KBM-7 (cell line): ENCODE measurements at regions of chr19 and their contacts with region 1.

Region 1: GRCh38 chr19:42108527-42109389 is 23.5 kb downstream of the POU2F2 start:
- DNase-seq: peak; percentile 91

Region 2: DNA sequence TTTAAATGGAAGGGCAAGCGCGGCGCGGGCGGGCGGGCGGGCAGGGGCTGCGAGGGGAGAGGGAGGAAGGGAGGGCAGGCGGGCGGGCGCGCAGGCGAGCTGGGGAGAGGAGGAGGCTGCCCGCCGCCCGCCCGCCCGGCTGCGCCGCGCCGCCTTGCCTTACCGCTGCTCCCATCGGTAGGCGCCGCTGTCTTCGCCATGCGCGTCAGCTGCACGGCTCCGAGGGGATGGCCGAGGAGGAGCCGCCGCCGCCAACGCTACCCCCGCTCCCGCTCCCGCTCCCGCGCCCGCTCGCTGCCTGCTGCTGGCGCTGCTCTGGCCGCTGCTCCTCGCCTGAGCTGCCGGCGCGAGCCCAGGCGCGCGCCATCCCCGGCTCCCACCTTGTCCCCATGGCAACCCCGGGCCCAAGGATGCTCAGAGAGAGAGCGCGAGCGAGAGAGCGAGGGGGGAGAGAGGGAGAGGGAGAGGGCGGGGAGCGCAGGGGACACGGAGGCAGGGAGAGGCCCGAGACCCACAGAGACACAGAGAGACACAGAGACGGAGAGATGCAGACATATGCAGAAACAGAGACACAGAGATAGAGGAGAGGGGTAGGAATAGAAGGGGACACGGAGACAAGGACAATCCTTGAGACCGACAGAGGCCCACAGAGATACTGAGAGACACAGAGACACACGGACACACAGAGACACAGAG is 68.4 kb after region 1 on chr19:
- in situ Hi-C with region 1: no loop called
- DNase-seq: peak; percentile 78

Region 3: DNA sequence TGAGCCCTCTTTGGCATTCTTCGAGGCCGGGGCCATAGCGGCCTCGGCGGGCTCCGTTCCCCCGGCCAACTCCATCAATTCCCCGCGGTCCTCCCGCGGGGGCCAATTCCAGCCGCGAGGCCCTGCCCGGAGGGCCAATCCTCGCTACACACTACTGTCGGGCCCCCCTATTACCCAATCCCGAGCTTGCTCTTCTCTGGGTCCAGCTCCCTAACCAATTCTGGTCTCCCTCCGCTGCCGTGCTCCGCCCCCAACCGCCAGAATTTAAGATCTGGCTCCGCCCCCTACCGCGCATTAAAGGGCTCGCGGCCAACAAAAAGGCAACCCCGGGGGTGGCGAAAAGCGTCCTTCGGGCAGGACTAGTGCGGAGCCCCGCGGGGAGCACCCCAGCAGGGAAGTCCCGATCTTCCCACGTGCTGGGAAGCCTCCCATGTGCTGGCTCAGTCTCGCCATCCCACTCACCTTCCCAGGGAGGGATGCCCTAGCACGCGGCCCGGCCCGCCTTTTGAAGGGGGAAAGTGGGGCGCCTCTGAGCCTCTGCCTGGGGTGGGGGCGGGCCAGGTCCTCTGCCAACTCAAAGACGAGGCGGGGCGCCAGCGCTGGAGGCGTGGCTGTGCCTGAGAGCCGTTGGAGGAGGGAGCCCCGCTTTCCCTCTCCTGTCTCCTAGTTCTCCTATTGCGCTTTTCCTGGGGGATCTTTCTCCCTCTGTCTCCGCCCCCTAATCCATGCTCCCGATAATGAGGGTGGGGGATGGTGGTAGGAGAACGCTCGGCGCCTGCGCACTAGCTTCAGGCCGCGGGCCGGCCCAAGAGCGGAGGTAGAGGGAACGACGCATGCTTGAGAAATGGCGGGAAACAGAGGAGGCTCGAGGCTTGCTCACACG is 314.9 kb after region 1 on chr19:
- in situ Hi-C with region 1: loop called (anchors 25 kb)
- DNase-seq: no peak

Region 4: DNA sequence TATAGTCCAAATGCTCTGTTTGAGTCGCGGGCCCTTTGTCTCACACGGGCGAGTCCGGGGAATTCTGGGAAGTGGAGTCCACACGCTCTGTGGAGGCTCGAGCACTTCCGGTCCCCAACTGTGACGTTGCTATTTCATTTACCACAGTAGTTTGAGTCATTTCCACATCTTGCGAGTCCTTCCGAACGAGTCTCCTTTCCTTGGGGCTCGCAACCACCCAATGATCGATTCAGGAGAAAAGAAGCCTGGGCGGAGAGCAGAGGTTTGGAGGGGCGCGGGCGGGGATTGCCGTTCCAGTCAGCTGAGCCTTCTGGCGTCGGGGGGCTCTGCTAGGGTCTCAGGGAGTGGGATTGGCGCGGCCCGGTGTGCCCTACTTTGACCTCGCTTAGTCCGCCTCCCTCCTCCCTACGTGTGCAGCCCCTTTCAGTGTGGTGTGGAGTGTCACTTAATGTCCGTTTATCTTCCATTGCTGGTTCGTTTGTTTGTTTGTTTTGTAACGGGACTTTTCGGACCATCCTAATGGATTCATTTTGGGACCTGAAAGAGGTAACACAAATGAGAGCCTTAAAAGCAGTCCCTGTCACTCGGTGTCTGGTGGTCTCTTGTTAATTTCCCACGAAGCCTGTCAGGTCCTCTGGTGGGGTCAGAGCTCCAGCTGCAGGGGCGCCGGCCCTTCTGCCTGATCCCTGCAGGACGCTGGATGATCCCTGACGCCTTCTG is 1916.6 kb after region 1 on chr19 and contains the start of gene ZNF222:
- in situ Hi-C with region 1: no loop called
- DNase-seq: peak; percentile 90